ENCODE measurements at regions of chr18 and their contacts with region 1.

Region 1: DNA sequence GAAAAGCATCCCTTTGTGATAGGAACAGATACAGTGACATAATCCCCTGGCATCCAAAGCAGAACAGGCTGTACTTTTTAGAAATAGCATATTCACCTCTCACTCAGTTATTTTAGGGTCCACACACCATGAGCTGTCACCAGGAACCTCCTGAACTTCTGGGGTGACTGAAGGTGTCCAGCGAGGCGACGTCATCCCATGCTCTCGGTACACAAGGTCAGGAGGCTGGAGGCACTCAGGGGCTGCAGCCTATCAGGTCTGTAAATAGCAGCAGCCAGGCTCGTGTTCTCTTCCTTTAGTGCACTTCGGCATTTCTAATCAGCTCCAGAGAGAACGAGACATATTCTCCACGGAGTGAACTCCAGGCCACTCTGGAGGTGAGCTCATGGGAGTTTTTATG is 98.3 kb downstream of the GATA6 start:
- DNase-seq: peak; percentile 83
- ATAC-seq: peak; percentile 92

Region 2: DNA sequence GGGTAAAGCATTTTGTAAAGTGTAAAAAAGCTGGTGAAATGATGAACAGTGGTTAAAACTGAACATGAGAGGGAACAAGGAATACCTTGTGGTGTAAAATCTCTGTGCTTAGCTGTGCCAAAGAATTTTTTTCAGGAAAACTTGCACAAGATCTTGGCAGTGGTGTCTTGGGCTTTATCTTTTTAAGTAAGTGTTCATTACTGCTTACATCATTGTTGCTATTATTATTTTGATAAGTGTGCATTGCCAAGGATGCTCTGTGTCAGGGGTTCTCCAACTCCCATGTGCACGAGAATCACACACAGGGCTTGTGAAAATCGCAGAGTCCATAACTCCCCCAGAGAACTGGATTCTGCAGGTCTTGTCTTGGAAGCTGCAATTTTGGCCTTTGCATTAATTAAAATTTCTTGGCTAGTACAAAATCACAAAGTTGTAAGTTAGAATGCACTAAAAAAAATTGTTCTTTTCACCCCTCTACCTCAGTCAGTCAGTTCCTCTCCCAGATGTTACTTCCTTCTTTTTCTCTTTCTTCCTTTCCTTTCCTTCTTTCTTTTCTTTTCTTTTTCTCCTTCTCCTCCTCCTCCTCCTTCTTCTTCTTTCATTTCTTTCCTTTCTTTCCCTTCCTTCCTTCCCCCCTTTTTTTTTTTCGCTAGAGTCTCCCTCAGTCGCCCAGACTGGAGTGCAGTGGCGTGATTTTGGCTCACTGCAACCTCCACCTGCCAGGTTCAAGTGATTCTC is 60.5 kb before region 1 on chr18:
- intact Hi-C with region 1: loop called in 1 of 2 experiments (anchors 5 kb)
- DNase-seq: peak; percentile 45
- ATAC-seq: peak; percentile 69 to 78

Region 3: DNA sequence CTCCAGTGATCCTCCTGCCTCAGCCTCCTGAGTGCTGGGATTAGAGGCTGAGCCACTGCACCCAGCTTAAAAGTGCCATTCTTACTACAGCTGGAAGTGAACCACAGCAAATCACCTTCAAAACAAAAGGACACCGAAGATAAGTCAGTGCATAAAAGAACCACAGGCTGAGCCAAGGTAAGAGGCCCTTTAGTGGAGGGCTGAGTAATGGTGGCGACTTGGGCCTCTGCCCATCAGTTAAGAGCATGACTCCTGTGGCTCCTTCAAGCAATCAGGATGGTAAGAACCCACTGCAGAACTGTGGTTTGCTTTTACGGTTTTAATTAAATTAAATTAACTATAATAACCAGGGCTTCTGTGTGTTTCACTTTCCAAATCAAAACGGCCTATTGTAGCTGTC is 74.9 kb after region 1 on chr18:
- intact Hi-C with region 1: no loop called
- DNase-seq: peak; percentile 51
- ATAC-seq: peak in 1 of 2 donors; percentile 9

Region 4: GRCh38 chr18:22471546-22472131 is 203.9 kb after region 1 on chr18:
- intact Hi-C with region 1: loop called in 1 of 2 experiments (anchors 2 kb)
- DNase-seq: peak; percentile 77
- ATAC-seq: peak; percentile 81 to 82